ENCODE measurements at regions of chr22 and their contacts with region 1.

Region 1: DNA sequence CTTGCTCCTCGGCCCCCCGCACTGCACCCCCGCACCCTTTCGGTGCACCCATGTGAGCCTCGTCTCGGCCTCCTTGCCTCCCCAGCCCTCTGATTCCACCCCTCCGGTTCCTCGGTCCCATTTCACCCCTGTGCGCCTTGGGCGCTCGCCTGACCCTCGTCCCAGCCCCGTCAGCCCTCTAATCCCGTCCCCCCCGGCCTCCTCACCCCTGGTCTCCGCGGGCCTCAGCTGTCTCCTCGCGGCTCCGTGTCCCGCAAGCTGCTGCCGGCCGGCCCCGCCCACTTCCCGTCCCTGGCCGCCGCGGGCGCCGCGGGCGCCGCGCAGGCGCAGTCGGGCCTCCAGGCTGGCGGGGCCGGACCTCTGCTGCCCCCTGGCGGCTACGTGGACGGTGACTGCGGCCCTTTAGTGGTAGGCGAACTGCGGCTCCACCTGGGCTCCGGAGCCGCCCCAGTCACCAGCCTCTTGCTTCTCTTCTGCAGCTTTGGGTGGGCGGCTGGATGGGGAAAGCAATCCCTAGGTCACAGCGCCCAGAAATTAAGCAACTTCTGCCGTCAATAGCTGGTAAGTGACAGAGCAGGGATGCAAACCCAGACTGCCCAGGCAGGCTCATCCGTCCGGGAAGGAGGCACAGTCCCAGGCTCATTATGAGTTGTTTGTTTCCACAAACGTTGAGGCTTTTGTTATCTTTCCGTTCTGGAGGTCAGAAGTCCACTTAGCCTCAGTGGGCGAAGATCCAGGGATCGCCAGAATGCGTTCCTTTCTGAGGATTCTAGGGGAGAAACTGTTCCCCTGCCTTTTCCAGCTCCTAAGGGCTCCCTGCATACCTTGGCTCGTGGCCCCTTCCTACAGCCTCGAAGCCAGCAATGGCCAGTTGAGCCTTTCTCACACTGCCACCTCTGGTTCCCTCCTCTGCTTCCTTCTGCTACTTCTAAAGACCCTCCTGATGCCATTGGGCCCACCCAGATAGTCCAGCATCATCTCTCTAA is at the start of gene PPM1F:
- DNase-seq: peak; percentile 64 to 91 (median 78)
- H3K4me3 ChIP-seq: peak within 1 kb of the TSS; percentile 44 to 80 (median 68)
- H3K27ac ChIP-seq: peak within 1 kb of the TSS in 25 of 59 donors; percentile 14 to 88 (median 46)
- H3K27me3 ChIP-seq: no peaks in the 10 kb centered on the region
- CTCF ChIP-seq: peak; percentile 64 to 99 (median 88)
- total RNA-seq, gene PPM1F: 22.1 to 52.4 (median 37.5) TPM

Region 2: DNA sequence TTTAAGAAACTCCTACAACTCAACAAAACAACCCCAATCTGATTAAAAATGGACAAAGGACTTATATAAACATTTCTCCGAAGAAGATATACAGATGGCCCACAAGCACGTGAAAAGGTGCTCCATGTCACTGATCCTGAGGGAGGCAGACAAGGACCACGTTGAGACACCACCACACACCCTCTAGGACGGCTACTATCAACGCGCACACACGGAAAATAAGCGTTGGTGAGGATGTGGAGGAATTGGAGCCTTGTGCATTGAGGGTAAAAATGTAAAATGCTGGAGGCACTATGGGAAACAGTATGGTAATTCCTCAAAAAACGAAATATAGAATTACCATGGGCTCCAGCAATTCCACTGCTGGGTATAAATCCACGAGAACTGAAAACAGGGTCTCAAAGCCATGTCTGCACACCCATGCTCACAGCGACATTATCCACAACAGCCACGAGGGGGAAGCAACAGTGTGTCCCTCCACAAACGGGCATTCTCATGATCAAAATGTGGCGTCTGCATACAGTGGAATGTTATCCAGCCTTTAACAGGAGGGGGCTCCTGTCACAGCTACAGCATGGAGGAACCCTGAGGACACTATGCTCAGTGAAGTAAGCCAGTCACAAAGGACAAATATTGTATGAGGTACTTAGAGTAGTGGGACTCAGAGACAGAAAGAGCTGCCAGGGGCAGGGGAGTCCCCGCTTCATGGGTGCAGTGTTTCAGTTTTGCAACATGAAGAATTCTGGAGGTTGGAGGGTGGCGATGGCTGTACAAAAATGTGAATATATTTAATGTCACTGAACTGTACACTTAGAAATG is 239.8 kb before region 1 on chr22:
- intact Hi-C with region 1: loop called (anchors 2 kb)
- DNase-seq: peak; percentile 57 to 90 (median 79)
- H3K4me3 ChIP-seq: peak overlapping the region in 44 of 59 donors; percentile 2 to 51 (median 30)
- H3K27ac ChIP-seq: peak overlapping the region in 41 of 59 donors; percentile 7 to 70 (median 47)
- H3K27me3 ChIP-seq: no peaks in the 10 kb centered on the region
- CTCF ChIP-seq: peak; percentile 61 to 96 (median 86)

Region 3: GRCh38 chr22:22001664-22002525 is 49.0 kb after region 1 on chr22:
- intact Hi-C with region 1: no loop called
- DNase-seq: no peak
- H3K4me3 ChIP-seq: no peak overlapping the region
- H3K27ac ChIP-seq: no peak overlapping the region
- H3K27me3 ChIP-seq: no peaks in the 10 kb centered on the region
- CTCF ChIP-seq: no peak